Activated naive CD4-positive, alpha-beta T cell treated with anti-CD3 and anti-CD28 coated beads for 36 hours (primary cell): ENCODE measurements at regions of chr1 and their contacts with region 1.

Region 1: DNA sequence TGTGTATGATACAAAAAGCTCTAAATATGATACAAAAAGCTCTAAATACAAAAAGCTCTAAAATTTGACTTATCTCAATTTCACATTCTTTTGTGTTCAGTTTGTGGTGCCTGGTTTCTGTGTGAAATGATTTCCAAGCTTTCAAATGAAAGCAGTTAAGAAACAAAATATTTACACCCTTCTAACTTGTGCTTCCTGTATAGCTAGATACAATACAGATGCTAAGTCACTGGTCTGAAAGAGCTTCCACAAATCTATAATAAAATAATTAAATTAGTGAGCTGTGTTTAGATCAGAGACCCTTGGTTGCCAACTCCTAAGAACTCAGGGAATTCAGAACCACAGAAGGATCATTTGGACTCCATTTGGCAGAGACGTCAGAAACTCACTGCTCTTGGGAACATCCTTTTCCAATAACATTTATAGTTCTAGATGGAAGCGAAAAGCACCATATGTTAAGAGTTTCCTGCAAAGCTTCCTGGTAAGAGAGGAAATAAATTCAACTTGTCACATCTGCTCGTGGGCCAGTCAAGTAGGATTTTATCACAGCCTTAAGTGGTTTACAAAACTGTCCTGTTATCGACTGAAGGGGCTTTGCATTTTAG is 1079.1 kb downstream of the ADGRL2 start:
- DNase-seq: no peak
- H3K4me3 Mint-ChIP-seq: no peak overlapping the region
- H3K27ac Mint-ChIP-seq: no peak overlapping the region
- H3K4me1 Mint-ChIP-seq: peaks cover 5% of the 10 kb centered on the region
- H3K27me3 Mint-ChIP-seq: peaks cover 3% of the 10 kb centered on the region

Region 2: GRCh38 chr1:82783044-82783443 is 96.8 kb before region 1 on chr1:
- CTCF ChIA-PET with region 1: no interaction called
- intact Hi-C with region 1: loop called (anchors 5 kb)
- DNase-seq: no peak
- H3K4me3 Mint-ChIP-seq: no peak overlapping the region
- H3K27ac Mint-ChIP-seq: no peak overlapping the region
- H3K4me1 Mint-ChIP-seq: peaks cover 9% of the 10 kb centered on the region
- H3K27me3 Mint-ChIP-seq: peaks cover 4% of the 10 kb centered on the region